ENCODE measurements at regions of chrX and their contacts with region 1.

Region 1: GRCh38 chrX:1442016-1442665 is 10.6 kb downstream of the ASMTL start:
- DNase-seq: peak; percentile 7
- H3K4me3 ChIP-seq: no peak overlapping the region
- H3K27ac ChIP-seq: no peak overlapping the region
- H3K4me1 ChIP-seq: no peaks in the 10 kb centered on the region
- H3K27me3 ChIP-seq: no peaks in the 10 kb centered on the region
- CTCF ChIP-seq: no peak
- POLR2A ChIP-seq: no peak

Region 2: GRCh38 chrX:1249101-1249887 is 192.8 kb before region 1 on chrX:
- intact Hi-C with region 1: no loop called
- DNase-seq: peak; percentile 47
- H3K4me3 ChIP-seq: no peak overlapping the region
- H3K27ac ChIP-seq: peak overlapping the region in 1 of 2 donors; percentile 18
- H3K4me1 ChIP-seq: peaks cover 14% of the 10 kb centered on the region
- H3K27me3 ChIP-seq: no peaks in the 10 kb centered on the region
- CTCF ChIP-seq: no peak
- POLR2A ChIP-seq: no peak

Region 3: DNA sequence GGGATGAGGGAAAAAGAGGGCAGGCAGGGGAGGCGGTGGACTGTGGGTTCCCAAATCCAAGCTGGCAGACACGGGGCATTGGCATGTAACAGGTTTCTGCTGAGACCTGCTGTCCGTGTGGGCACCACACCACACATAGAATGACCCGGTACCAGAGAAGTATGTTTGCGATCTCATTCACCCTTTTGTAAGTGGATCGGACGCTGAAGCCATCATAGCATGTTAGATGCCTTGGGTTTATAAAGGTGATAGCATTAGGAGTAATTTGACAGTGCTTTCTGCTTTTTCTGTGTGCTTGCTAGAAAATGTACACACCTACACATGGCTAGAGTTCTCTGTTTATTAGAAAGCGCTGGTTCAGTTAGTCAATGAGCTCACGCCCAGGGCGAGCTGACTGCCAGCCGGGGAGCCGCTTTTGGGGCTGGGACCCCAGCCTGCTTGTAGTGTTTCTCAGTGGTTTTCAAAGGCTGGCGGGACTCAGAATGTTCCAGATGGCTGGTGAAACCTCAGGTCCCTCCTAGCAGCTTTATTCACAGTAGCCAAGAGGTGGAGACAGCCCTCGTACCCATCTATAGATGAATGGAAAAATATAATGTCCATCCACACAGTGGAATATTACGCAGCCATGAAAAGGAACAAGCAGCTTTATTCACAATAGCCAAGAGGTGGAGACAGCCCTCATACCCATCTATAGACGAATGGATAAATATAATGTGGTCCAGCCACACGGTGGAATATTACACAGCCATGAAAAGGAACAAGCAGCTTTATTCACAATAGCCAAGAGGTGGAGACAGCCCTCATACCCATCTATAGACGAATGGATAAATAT is 105.0 kb before region 1 on chrX:
- intact Hi-C with region 1: no loop called
- DNase-seq: no peak
- H3K4me3 ChIP-seq: peak overlapping the region; percentile 40 to 47
- H3K27ac ChIP-seq: peak overlapping the region; percentile 56 to 78
- H3K4me1 ChIP-seq: peaks cover 5% of the 10 kb centered on the region
- H3K27me3 ChIP-seq: no peaks in the 10 kb centered on the region
- CTCF ChIP-seq: no peak
- POLR2A ChIP-seq: no peak

Region 4: GRCh38 chrX:1391707-1392375 is 50.3 kb before region 1 on chrX and contains the start of gene SLC25A6:
- intact Hi-C with region 1: loop called (anchors 10 kb)
- DNase-seq: peak; percentile 98
- H3K4me3 ChIP-seq: peak within 1 kb of the TSS; percentile 100
- H3K27ac ChIP-seq: peak within 1 kb of the TSS; percentile 96 to 99
- H3K4me1 ChIP-seq: peaks cover 27% of the 10 kb centered on the region
- H3K27me3 ChIP-seq: no peaks in the 10 kb centered on the region
- CTCF ChIP-seq: peak in 2 of 3 experiments; percentile 8 to 29
- POLR2A ChIP-seq: no peak
- total RNA-seq, gene SLC25A6: 171 to 293 TPM

Region 5: DNA sequence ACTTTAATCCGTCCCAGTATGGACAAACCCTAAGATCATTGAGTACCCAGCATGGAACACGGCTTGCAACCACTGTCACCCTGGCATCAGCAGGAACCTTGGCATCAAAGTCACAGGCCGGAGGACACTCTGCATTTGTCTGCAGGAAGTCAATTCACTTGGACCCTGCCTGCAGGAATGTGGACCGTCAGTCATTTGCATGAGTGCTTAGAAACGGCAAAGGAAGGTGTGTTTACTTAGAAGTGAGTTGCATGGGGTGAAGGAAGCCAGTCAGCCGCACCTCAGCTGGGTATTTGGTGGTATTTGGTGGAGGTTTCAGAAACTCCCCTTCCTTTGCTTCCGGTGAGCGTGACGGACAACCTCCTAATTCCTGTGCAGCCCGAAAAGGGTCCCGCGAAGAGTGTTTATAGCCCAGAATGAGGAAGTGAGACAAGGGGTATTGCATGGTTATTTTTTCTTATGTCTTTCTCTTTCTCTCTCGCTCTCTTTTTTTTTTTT is 79.4 kb after region 1 on chrX:
- intact Hi-C with region 1: no loop called
- DNase-seq: no peak
- H3K4me3 ChIP-seq: no peak overlapping the region
- H3K27ac ChIP-seq: no peak overlapping the region
- H3K4me1 ChIP-seq: no peaks in the 10 kb centered on the region
- H3K27me3 ChIP-seq: no peaks in the 10 kb centered on the region
- CTCF ChIP-seq: no peak
- POLR2A ChIP-seq: no peak

Region 6: GRCh38 chrX:1580735-1581531 is 138.8 kb after region 1 on chrX:
- intact Hi-C with region 1: no loop called
- DNase-seq: peak; percentile 83
- H3K4me3 ChIP-seq: no peak overlapping the region
- H3K27ac ChIP-seq: no peak overlapping the region
- H3K4me1 ChIP-seq: no peaks in the 10 kb centered on the region
- H3K27me3 ChIP-seq: no peaks in the 10 kb centered on the region
- CTCF ChIP-seq: peak; percentile 51 to 85 (median 77)
- POLR2A ChIP-seq: no peak

Measured in testis (tissue), 5 donors.